ENCODE measurements at regions of chr9 and their contacts with region 1.

Region 1: DNA sequence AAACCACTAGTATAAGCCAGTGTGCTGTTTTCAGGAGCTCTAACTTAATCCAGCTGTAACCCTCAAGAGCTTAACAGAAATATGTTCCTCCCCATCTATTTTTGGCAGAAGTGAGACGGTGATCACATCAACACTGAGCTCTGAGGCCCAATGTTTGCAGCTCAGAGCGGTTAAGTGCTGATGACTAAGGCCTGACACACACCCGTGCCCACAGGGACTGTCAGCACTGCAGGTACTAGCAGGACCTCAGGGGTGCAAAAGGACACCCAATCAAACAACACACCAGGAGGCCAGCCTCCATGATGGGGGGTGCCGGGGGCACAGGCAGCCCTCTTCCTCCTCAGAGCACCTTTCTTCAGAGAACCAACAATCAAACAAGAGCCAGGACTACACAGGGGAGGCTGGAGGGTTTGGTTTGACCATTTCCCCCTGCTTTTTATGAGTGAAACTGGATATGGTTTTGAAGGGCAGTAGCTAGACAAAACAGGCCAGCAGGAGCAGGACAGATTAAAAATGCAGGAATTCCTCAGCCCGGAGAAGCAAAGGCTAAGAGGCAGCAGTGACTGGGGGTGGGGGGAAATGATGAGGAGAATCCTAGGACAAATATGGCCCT is 61.3 kb downstream of the RAPGEF1 start:
- DNase-seq: peak; percentile 87
- CTCF ChIP-seq: no peak

Region 2: DNA sequence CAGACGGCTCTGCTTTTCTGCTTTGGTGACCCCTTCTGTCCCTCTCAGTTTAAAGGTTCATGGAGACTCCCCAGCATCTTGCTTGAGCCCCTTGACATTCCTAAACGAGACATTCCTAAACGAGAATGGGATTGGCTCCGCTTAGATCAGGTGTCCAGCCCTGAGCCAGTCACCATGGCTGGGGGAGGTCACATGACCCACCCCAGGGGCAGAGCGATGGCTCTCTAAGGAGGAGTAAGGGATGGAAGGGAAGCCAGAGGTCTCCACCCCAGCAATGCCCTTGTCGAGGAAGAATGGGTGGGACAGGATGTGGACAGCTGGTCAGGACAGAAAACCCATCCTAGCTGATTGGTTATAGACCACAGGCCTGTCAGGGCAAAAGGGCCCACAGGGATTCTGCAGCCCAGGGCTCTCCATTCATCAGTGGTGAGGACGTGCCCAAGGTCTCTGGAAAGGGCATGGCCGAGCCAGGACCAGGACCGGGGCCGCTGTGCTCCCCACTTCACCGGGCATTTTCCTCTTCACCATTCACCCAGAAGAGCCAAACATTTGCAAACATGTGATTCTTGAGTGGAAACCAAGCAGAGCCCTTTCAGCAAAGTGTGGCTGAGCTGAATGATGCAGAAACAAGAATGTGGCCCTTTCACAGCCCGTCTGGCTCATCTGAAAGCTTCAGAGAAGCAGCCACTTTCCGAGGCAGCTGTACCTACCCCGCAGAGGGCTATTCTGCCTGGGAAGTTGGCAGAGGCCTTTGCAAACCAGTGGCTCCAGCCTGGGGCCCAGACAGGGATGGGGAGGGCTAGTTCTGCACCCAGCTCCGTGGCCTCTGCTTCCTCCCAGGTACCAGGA is 602.0 kb before region 1 on chr9:
- CTCF ChIA-PET with region 1: no interaction called
- POLR2A ChIA-PET with region 1: no interaction called
- DNase-seq: no peak
- CTCF ChIP-seq: no peak

Region 3: DNA sequence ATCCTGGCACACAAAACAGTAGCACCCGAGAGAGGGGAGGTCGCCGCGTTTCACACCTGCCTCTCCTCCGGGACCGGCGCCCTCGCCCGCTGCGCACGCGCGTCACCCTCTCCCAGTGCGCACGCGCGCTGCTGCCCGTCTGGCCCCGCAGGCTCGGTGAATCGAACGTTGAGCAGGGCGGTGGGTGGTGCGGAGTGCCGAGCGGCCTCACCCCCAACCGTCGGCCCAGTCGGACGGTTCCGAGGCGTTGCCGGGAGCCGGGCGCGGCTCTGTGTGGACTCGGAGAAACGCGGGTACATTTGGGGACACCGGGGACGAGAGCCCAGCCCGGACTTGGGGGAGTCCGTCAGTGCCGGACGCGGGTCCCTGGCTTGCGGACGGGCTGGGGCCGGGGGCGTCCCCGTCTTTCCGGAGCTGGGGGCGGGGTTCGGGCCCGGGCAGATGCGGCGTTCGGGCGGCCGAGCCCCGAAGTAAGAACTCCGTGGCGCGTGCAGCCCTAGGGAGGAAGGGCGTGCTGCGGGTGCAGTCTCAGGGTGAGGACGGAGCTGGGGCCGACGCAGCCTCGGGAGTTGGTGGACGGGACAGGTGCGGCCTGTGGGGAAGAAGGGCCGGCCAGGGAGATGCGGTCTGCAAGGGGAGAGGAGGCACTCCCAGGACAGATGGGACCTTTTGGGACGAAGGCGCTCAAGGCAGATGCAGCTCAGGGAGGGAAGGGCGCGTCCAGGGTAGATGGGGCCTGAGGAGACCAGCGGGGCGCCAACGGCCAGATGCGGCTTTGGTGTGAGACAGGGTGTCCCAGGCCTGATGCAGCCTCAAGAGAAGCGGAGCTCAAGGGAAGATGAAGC is 175.6 kb before region 1 on chr9 and contains the start of gene POMT1:
- CTCF ChIA-PET with region 1: no interaction called
- POLR2A ChIA-PET with region 1: no interaction called
- DNase-seq: peak; percentile 98
- CTCF ChIP-seq: no peak

Region 4: GRCh38 chr9:131667191-131667975 is 11.2 kb before region 1 on chr9:
- CTCF ChIA-PET with region 1: interaction called, 16 read pairs
- POLR2A ChIA-PET with region 1: interaction called, 6 read pairs
- DNase-seq: peak; percentile 44
- CTCF ChIP-seq: no peak

Region 5: GRCh38 chr9:131697097-131697496 is 18.5 kb after region 1 on chr9:
- CTCF ChIA-PET with region 1: interaction called, 42 read pairs
- POLR2A ChIA-PET with region 1: interaction called, 4 read pairs
- DNase-seq: no peak
- CTCF ChIP-seq: no peak

Region 6: GRCh38 chr9:131733541-131734061 is 55.0 kb after region 1 on chr9:
- CTCF ChIA-PET with region 1: interaction called, 39 read pairs
- POLR2A ChIA-PET with region 1: interaction called, 11 read pairs
- DNase-seq: no peak
- CTCF ChIP-seq: no peak

Region 7: DNA sequence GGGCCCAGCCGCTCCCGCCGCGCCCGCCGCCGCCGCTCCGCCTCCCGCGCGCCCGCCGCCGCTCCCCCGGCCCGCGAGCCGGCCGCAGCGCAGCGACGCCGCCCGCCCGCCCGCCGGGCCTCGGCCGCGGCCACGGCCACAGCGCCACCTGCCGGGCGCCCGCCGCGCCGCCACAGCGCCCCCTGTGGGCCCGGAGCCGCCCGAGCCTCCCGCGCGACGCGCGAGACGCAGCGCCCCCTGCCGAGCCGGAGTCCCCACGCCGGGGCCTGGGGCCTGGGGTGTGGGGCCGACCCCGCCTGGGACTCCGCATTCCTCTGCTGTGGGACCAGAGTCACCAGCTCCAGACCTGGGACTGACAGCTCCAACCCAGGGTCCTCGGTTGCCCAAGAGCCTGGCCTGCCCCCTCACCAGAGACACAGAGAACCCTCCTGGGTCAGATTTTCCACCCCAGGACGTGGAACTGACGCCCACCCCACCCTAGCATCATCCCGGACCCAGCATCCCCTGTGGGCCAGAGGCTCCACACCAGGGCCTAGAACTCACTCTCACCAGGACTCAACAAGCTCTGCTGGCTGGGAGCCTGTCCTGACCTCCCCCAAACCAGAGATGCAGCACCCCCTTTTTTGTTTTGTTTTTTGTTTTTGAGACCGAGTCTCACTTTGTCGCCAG is 61.5 kb after region 1 on chr9 and contains the start of gene RAPGEF1:
- CTCF ChIA-PET with region 1: interaction called, 39 read pairs
- POLR2A ChIA-PET with region 1: interaction called, 3 read pairs
- DNase-seq: peak; percentile 85
- CTCF ChIP-seq: peak; percentile 100

Region 8: DNA sequence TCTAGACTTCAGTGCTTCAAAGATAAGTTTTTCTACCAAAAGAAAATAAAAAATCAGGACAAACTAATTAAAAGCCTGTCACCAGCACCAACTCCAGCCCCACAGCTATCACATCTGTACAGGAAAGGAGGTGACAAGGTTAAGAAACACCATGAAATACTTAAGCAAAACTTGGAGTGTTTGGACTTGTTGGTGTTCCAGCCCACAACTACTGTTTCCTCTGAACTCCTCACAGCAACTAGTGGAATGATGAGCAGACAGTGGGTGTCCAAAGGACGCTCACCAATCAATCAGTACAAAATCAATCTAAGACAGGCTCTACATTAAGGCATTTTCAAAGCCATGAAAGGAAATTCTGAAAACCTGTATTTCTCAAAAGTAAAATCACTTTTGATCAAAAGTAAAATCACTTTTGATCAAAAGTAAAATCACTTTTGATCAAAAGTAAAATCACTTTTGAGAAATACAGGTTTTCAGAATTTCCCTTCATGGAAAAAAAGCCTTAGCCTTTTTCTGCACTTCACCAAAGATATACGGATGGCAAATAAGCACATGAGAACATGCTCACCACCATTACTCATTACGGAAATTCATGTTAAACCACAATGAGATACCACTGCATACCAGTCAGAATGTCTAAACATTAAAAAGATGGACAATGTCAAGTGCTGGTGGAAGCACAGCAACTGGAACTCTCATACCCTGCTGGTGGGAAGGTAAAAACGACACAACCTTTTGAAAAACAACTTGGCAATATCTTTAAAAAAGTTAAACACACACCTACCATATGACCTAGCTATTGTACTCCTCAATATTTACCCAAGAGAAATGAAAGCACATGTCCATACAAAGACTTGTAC is 321.3 kb after region 1 on chr9:
- CTCF ChIA-PET with region 1: no interaction called
- POLR2A ChIA-PET with region 1: no interaction called
- DNase-seq: no peak
- CTCF ChIP-seq: no peak

Measured in GM10248 (cell line).